Thyroid gland (tissue), 4 donors: ENCODE measurements at regions of chr20 and their contacts with region 1.

Region 1: DNA sequence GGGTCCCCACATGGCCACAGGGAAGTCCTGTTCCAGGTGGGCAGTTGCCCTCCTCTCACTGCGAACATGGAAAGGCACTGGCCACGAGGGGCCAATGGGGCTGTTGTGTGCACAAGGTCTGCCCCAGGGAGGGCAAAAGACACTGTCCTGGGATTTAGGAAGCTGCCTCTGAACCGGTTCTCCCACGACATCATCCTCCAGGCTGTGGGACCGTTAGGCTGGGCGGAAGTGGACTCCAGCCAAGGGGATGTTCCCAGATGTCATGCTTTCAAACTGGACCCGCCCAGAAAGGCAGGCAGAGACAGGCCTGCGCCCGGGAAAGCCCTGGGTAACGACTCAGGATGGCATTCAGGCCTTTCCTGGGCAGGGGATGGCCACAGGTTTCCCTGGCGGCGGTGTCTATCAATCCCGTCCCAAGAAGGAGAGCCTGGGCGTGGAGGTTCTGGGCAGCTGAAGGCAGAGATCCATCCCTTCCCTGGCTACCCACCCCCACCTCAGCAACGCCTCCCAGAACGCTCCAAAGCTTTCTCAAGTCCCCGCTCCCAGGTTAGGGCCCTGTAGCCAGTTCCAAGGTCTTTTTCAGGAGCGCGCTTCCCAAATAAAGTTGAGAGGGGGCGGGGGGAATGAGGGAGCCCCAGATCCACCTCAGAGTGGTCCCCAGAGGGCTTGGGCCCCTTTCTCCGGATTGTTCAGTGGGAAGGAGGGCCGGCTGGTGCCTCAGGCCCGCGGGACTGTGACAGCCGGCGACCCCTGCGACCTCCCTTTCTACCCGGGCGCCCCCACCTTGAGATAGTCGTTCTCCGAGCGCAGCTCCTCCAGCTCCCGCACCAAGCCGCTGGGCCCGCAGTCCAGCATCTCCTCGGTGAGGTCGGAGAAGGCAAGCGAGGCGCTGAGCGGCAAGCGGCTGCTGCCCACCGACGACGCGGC is 13.8 kb upstream of the TLDC2 start:
- DNase-seq: peak; percentile 80 to 87
- H3K4me3 ChIP-seq: peak overlapping the region; percentile 19 to 70 (median 33)
- H3K27ac ChIP-seq: peak overlapping the region; percentile 79 to 94 (median 92)
- H3K4me1 ChIP-seq: peaks cover 52 to 76% of the 10 kb centered on the region in 2 donors
- H3K27me3 ChIP-seq: no peaks in the 10 kb centered on the region
- CTCF ChIP-seq: no peak
- POLR2A ChIP-seq: peak in 1 of 2 donors; percentile 66

Region 2: GRCh38 chr20:36550797-36551299 is 311.3 kb before region 1 on chr20:
- intact Hi-C with region 1: loop called (anchors 10 kb)
- DNase-seq: no peak
- H3K4me3 ChIP-seq: no peak overlapping the region
- H3K27ac ChIP-seq: peak overlapping the region in 1 of 3 donors; percentile 17
- H3K4me1 ChIP-seq: peaks cover 0 to 7% of the 10 kb centered on the region in 2 donors
- H3K27me3 ChIP-seq: no peaks in the 10 kb centered on the region
- CTCF ChIP-seq: no peak
- POLR2A ChIP-seq: no peak

Region 3: DNA sequence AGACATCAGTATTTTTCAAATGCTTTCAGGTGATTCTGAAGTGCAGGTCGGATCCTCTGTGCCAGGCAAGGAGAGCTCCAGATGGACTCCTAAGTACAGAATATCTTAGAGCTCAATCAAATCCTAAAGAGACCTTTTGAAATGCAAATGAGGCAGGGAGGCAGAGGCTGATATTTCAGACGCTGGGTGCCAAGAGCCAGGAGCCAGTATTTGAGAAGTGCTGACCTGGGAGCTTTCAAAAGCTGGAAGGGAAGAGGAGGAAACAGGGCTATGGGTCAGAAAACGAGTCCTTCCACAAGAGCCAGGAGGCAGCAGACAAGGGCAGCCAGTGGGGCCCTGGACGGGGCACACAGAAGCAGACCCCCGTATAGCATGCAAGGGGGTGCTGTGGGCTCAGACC is 42.5 kb before region 1 on chr20:
- intact Hi-C with region 1: loop called (anchors 5 kb)
- DNase-seq: peak; percentile 65 to 72
- H3K4me3 ChIP-seq: no peak overlapping the region
- H3K27ac ChIP-seq: peak overlapping the region; percentile 23 to 83 (median 60)
- H3K4me1 ChIP-seq: peaks cover 62 to 75% of the 10 kb centered on the region in 2 donors
- H3K27me3 ChIP-seq: no peaks in the 10 kb centered on the region
- CTCF ChIP-seq: peak in 1 of 6 experiments; percentile 13
- POLR2A ChIP-seq: no peak

Region 4: DNA sequence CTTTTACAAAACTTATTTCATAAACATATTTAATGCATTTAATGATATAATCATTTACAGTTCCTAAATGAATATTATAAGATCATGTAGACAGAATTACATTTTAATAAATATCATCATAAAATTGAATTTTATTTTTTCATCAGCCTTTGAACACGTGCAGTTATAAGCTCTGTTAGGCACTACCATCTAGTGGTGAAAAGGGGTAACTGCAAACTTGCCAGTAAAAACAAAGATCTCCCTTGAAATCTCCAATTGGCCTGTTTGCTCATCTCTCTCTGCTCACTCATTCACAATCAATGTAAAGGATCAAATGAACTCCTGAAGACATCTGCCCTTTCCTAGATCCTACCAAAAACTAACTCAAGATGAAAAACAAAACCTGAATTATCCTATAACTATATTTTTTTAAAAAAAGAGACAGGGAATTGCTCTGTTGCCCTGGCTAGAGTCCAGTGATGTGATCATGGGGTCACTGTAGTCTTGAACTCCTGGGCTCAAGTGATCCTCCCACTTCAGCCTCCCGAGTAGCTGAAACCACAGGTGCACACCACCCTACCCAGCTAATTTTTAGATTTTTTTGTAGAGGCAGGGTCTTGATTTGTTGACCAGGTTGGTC is 57.7 kb after region 1 on chr20:
- intact Hi-C with region 1: no loop called
- DNase-seq: no peak
- H3K4me3 ChIP-seq: no peak overlapping the region
- H3K27ac ChIP-seq: no peak overlapping the region
- H3K4me1 ChIP-seq: no peaks in the 10 kb centered on the region
- H3K27me3 ChIP-seq: no peaks in the 10 kb centered on the region
- CTCF ChIP-seq: peak; percentile 83 to 91 (median 90)
- POLR2A ChIP-seq: no peak